CD4-positive, alpha-beta T cell (primary cell): ENCODE measurements at regions of chr20 and their contacts with region 1.

Region 1: DNA sequence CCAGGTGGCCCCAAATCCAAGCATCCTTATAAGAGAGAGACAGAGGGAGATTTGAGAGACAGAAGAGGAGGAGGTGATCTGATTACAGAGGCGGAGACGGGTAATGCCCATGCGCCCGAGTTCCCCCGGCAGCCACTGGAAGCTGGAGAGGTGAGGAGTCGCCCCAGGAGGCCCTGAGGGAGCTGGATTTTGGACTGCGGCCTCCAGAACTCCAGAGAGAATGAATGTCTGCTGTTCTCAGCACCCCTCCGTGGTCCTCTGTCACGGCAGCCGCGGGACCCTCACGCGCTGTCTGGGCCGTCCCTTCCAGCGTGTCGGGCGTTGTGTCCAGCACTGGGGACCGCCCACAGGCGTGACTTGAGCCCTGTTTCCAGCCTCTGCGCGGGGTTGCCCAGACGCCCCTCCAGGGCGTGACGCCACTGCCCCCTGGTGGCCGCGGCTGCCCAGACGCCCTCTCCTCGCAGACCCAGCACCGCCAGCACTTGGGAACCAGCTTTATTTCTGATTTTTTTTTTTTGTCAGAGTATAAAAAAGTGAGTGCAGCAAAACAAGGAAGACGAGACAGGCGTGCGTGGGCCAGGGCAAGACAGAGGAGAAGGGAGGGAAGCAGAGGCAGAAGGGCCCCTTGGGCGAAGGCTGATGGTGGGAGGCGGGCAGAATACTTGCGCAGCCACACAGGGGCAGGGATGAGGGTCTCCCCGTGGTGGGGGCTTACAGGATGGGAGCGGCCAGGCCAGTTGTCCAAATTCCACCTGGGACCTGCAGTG is 4.1 kb upstream of the ZNF512B start:
- DNase-seq: peak; percentile 62 to 89 (median 75)
- ATAC-seq: peak; percentile 51
- H3K4me3 ChIP-seq: no peak overlapping the region
- H3K4me3 Mint-ChIP-seq: peak overlapping the region; percentile 26
- H3K27ac ChIP-seq: peak overlapping the region in 1 of 2 donors; percentile 13
- H3K27ac Mint-ChIP-seq: peak overlapping the region; percentile 58
- H3K4me1 ChIP-seq: peaks cover 43% of the 10 kb centered on the region
- H3K4me1 Mint-ChIP-seq: peaks cover 56% of the 10 kb centered on the region
- H3K27me3 ChIP-seq: no peaks in the 10 kb centered on the region
- H3K27me3 Mint-ChIP-seq: no peaks in the 10 kb centered on the region
- CTCF ChIP-seq: peak; percentile 98

Region 2: DNA sequence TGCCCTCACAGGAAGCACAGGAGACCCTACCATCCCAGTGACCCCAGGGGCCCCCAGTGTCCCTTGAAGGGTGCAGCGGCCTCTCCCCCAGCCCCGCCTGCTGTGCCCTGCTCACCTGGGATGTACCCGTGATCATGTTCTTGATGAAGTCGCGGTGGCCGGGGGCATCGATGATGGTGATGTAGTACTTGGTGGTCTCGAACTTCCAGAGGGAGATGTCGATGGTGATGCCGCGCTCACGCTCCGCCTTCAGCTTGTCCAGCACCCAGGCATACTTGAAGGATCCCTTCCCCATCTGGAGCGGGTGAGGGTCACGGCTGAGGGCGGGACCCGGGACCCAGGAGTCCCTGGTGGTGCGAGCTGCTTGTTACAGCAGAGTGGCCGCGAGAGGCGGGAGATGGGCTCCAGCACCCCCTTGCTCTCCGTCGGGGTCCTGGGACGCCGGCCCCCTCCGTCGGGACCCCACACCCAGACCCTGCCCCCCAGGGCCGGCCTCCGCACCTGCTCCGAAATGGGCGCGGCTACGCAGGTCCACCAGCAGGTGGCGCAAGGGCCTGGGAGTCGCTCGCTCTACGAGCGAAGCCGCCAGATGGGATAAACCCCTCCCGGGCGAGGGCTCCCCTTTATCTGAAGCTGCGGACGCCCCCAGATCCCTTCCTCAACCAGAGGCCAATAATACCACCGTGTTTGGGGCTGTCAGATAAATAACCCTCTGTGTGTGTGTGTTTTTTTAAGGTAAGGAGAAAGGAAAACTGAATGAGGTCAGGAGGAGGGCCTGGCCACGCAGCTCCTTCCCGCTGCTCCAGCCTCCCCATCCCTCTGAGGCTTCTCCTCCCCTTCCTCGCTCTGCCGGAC is 477.9 kb before region 1 on chr20:
- CTCF ChIA-PET with region 1: interaction called, 4 read pairs
- POLR2A ChIA-PET with region 1: no interaction called
- intact Hi-C with region 1: loop called in 1 of 2 experiments (anchors 2 kb)
- DNase-seq: peak; percentile 64 to 88 (median 75)
- ATAC-seq: peak; percentile 68
- H3K4me3 ChIP-seq: peak overlapping the region; percentile 18
- H3K4me3 Mint-ChIP-seq: peak overlapping the region; percentile 45
- H3K27ac ChIP-seq: no peak overlapping the region
- H3K27ac Mint-ChIP-seq: no peak overlapping the region
- H3K4me1 ChIP-seq: peaks cover 33% of the 10 kb centered on the region
- H3K4me1 Mint-ChIP-seq: peaks cover 5% of the 10 kb centered on the region
- H3K27me3 ChIP-seq: peaks cover 30 to 35% of the 10 kb centered on the region in 2 experiments
- H3K27me3 Mint-ChIP-seq: peaks cover 28% of the 10 kb centered on the region
- CTCF ChIP-seq: peak; percentile 93

Region 3: GRCh38 chr20:63580796-63581461 is 392.9 kb before region 1 on chr20:
- CTCF ChIA-PET with region 1: no interaction called
- POLR2A ChIA-PET with region 1: no interaction called
- intact Hi-C with region 1: loop called in 1 of 2 experiments (anchors 5 kb)
- DNase-seq: peak; percentile 62 to 87 (median 76)
- ATAC-seq: peak; percentile 99
- H3K4me3 ChIP-seq: no peak overlapping the region
- H3K4me3 Mint-ChIP-seq: no peak overlapping the region
- H3K27ac ChIP-seq: no peak overlapping the region
- H3K27ac Mint-ChIP-seq: peak overlapping the region; percentile 19
- H3K4me1 ChIP-seq: peaks cover 10% of the 10 kb centered on the region
- H3K4me1 Mint-ChIP-seq: peaks cover 20% of the 10 kb centered on the region
- H3K27me3 ChIP-seq: no peaks in the 10 kb centered on the region
- H3K27me3 Mint-ChIP-seq: no peaks in the 10 kb centered on the region
- CTCF ChIP-seq: peak; percentile 63

Region 4: DNA sequence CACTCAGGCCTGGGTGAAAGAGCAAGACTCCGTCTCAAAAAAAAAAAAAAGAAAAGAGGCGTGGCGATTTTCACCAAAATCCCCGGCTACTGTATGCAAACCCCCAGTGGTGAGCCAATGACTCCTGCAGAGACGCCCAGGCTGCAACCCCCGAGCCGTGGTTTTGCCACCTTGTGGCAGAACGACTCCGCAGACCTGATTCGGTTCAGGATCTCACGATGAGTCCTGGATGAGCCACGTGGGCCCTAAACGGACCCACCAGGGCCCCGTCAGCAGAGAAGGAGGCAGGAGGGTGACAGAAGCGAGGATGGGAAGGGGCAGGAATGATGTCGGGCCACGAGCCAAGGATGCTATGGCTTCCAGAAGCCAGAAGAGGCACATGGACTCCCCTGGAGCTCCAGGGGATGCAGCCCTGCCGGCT is 191.8 kb before region 1 on chr20:
- CTCF ChIA-PET with region 1: interaction called, 15 read pairs
- POLR2A ChIA-PET with region 1: no interaction called
- intact Hi-C with region 1: loop called (anchors 1 to 10 kb)
- DNase-seq: peak in 13 of 14 experiments; percentile 16 to 88 (median 48)
- ATAC-seq: peak; percentile 93
- H3K4me3 ChIP-seq: peak overlapping the region; percentile 14
- H3K4me3 Mint-ChIP-seq: peak overlapping the region; percentile 43
- H3K27ac ChIP-seq: peak overlapping the region in 1 of 2 donors; percentile 22
- H3K27ac Mint-ChIP-seq: peak overlapping the region; percentile 67
- H3K4me1 ChIP-seq: peaks cover 23% of the 10 kb centered on the region
- H3K4me1 Mint-ChIP-seq: peaks cover 23% of the 10 kb centered on the region
- H3K27me3 ChIP-seq: no peaks in the 10 kb centered on the region
- H3K27me3 Mint-ChIP-seq: no peaks in the 10 kb centered on the region
- CTCF ChIP-seq: peak; percentile 51

Region 5: GRCh38 chr20:63791497-63792156 is 182.2 kb before region 1 on chr20:
- CTCF ChIA-PET with region 1: interaction called, 15 read pairs
- POLR2A ChIA-PET with region 1: no interaction called
- intact Hi-C with region 1: loop called (anchors 1 to 10 kb)
- DNase-seq: no peak
- ATAC-seq: no peak
- H3K4me3 ChIP-seq: no peak overlapping the region
- H3K4me3 Mint-ChIP-seq: no peak overlapping the region
- H3K27ac ChIP-seq: no peak overlapping the region
- H3K27ac Mint-ChIP-seq: no peak overlapping the region
- H3K4me1 ChIP-seq: peaks cover 5% of the 10 kb centered on the region
- H3K4me1 Mint-ChIP-seq: no peaks in the 10 kb centered on the region
- H3K27me3 ChIP-seq: no peaks in the 10 kb centered on the region
- H3K27me3 Mint-ChIP-seq: peaks cover 3% of the 10 kb centered on the region
- CTCF ChIP-seq: no peak

Region 6: DNA sequence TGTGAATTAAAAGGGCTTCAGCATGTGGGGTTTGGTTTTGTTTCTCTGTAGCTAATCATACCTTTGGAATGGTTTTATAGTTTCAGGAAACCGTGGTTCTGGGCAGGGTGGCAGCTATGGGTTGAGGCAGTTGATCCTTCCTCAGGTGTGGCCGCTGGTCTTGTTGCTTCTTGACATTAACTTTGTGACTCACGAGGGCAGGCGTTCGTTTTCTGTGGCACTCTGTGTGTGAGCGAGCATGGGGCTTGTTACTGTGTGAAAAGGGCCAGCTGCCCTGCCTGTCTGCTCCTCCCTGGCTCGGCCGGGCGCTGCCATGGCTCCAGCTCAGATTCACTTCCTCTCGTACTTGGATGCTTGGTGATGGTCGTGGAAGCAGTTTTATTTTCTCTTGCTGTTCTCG is 62.6 kb before region 1 on chr20:
- CTCF ChIA-PET with region 1: interaction called, 11 read pairs
- POLR2A ChIA-PET with region 1: no interaction called
- intact Hi-C with region 1: loop called (anchors 1 kb)
- DNase-seq: peak in 2 of 14 experiments; percentile 20 to 41
- ATAC-seq: no peak
- H3K4me3 ChIP-seq: no peak overlapping the region
- H3K4me3 Mint-ChIP-seq: peak overlapping the region; percentile 9
- H3K27ac ChIP-seq: no peak overlapping the region
- H3K27ac Mint-ChIP-seq: peak overlapping the region; percentile 56
- H3K4me1 ChIP-seq: peaks cover 41% of the 10 kb centered on the region
- H3K4me1 Mint-ChIP-seq: peaks cover 32% of the 10 kb centered on the region
- H3K27me3 ChIP-seq: no peaks in the 10 kb centered on the region
- H3K27me3 Mint-ChIP-seq: no peaks in the 10 kb centered on the region
- CTCF ChIP-seq: no peak

Region 7: GRCh38 chr20:63955827-63956663 is 17.8 kb before region 1 on chr20 and contains the start of gene UCKL1:
- CTCF ChIA-PET with region 1: interaction called, 13 read pairs
- POLR2A ChIA-PET with region 1: interaction called, 7 read pairs
- intact Hi-C with region 1: no loop called
- DNase-seq: peak; percentile 81 to 95 (median 88)
- ATAC-seq: peak; percentile 79
- H3K4me3 ChIP-seq: peak within 1 kb of the TSS; percentile 77
- H3K4me3 Mint-ChIP-seq: peak within 1 kb of the TSS; percentile 87
- H3K27ac ChIP-seq: peak within 1 kb of the TSS; percentile 45 to 69
- H3K27ac Mint-ChIP-seq: peak within 1 kb of the TSS; percentile 82
- H3K4me1 ChIP-seq: peaks cover 59% of the 10 kb centered on the region
- H3K4me1 Mint-ChIP-seq: peaks cover 37% of the 10 kb centered on the region
- H3K27me3 ChIP-seq: no peaks in the 10 kb centered on the region
- H3K27me3 Mint-ChIP-seq: no peaks in the 10 kb centered on the region
- CTCF ChIP-seq: no peak
- total RNA-seq, gene UCKL1: 41.3 to 46.1 TPM